ENCODE measurements at regions of chr15 and their contacts with region 1.

Region 1: GRCh38 chr15:73246439-73246838 is 122.3 kb downstream of the HCN4 start:
- DNase-seq: no peak
- H3K4me3 ChIP-seq: no peak overlapping the region
- H3K4me3 Mint-ChIP-seq: no peak overlapping the region
- H3K27ac ChIP-seq: no peak overlapping the region
- H3K27ac Mint-ChIP-seq: no peak overlapping the region
- H3K4me1 ChIP-seq: no peaks in the 10 kb centered on the region
- H3K4me1 Mint-ChIP-seq: no peaks in the 10 kb centered on the region
- H3K27me3 ChIP-seq: no peaks in the 10 kb centered on the region
- H3K27me3 Mint-ChIP-seq: peaks cover 3% of the 10 kb centered on the region in 2 donors

Region 2: DNA sequence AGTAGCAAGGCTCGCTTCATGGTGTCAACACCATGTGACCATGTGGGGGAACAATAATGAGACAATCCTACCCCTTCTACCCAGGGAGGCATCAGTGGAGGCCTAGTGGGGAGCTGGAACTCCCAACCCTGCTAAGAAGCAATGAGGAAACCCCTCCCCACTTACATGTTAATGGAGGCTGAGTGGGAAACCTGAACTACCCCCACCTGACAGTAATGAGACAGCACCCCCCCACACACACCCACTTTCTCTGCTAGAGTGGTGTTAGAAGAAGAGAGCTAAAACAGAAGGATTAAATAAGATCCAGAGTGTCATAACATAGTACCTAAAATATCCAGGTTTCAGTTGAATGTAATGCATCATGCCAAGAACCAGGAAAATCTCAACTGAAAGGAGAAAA is 115.6 kb before region 1 on chr15:
- CTCF ChIA-PET with region 1: no interaction called
- POLR2A ChIA-PET with region 1: no interaction called
- DNase-seq: no peak
- H3K4me3 ChIP-seq: no peak overlapping the region
- H3K4me3 Mint-ChIP-seq: no peak overlapping the region
- H3K27ac ChIP-seq: no peak overlapping the region
- H3K27ac Mint-ChIP-seq: no peak overlapping the region
- H3K4me1 ChIP-seq: no peaks in the 10 kb centered on the region
- H3K4me1 Mint-ChIP-seq: peaks cover 0 to 4% (median 0%) of the 10 kb centered on the region in 3 donors
- H3K27me3 ChIP-seq: no peaks in the 10 kb centered on the region
- H3K27me3 Mint-ChIP-seq: peaks cover 0 to 4% of the 10 kb centered on the region in 2 donors

Region 3: DNA sequence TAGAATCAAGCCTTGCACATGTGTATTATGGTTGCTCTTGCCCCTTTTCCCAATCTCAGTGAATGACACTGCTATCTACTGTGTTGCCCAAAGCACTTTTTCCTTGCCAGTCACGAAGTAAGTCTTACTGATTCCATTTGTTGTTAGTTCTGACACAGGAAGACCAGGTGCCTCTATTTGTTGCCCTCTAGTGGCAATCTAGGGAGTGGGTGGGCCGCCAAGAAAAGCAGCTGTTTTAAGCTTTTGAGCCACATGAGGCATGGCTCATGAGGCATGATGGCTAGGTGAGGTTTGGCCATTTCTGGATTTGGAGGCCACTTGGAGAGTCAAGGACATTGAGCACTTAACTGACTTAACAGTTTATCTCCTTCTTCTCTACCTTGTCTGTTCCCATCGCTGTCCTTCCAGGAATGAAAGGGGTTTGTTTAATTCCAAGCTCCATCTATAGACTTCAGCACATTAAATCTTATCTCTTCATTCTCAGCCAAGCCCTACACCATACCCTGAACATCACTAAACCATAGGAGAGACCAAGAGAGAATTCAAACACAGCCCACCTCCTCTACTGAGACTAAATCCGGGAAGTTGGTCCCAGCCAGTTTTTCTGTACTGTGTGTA is 19.2 kb after region 1 on chr15:
- CTCF ChIA-PET with region 1: interaction called, 14 read pairs
- POLR2A ChIA-PET with region 1: no interaction called
- DNase-seq: peak; percentile 12 to 63 (median 22)
- H3K4me3 ChIP-seq: no peak overlapping the region
- H3K4me3 Mint-ChIP-seq: no peak overlapping the region
- H3K27ac ChIP-seq: no peak overlapping the region
- H3K27ac Mint-ChIP-seq: no peak overlapping the region
- H3K4me1 ChIP-seq: no peaks in the 10 kb centered on the region
- H3K4me1 Mint-ChIP-seq: peaks cover 0 to 3% (median 3%) of the 10 kb centered on the region in 3 donors
- H3K27me3 ChIP-seq: no peaks in the 10 kb centered on the region
- H3K27me3 Mint-ChIP-seq: no peaks in the 10 kb centered on the region

Measured in CD8-positive, alpha-beta memory T cell (primary cell).